ENCODE measurements at regions of chr14 and their contacts with region 1.

Region 1: DNA sequence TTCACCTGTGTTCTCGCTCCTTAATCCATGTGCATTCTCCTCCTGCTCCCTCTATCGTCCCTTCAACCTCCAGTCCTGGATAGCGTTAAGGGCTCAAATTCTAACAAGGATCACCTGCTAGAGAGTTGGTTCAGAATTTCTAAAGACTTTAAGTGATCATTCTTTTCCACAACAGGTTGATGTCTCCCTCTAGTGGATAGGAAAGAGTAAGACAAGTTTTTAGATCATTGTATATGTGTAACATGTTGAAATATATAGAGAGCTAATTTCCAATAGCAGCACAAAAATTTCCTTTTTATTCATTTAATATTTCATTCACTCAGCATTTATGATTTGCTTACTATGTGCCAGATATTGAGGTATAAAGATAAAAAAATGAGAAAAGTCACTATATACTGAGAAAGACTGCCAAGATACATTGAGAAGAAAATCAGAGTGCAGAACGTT is 9.3 kb upstream of the ESR2 start:
- DNase-seq: peak; percentile 65
- H3K4me3 ChIP-seq: no peak overlapping the region
- H3K27ac ChIP-seq: no peak overlapping the region
- H3K4me1 ChIP-seq: no peaks in the 10 kb centered on the region
- H3K27me3 ChIP-seq: no peaks in the 10 kb centered on the region
- CTCF ChIP-seq: peak; percentile 71 to 83

Region 2: GRCh38 chr14:63800651-63801375 is 502.7 kb before region 1 on chr14:
- CTCF ChIA-PET with region 1: no interaction called
- dilution Hi-C with region 1: no loop called
- in situ Hi-C with region 1: loop called (anchors 10 kb)
- intact Hi-C with region 1: loop called (anchors 1 kb)
- DNase-seq: no peak
- H3K4me3 ChIP-seq: no peak overlapping the region
- H3K27ac ChIP-seq: no peak overlapping the region
- H3K4me1 ChIP-seq: no peaks in the 10 kb centered on the region
- H3K27me3 ChIP-seq: no peaks in the 10 kb centered on the region
- CTCF ChIP-seq: no peak

Region 3: GRCh38 chr14:64005822-64006221 is 297.7 kb before region 1 on chr14:
- CTCF ChIA-PET with region 1: interaction called, 20 read pairs
- dilution Hi-C with region 1: no loop called
- in situ Hi-C with region 1: loop called in 1 of 2 experiments (anchors 25 kb)
- intact Hi-C with region 1: loop called (anchors 1 kb)
- DNase-seq: no peak
- H3K4me3 ChIP-seq: no peak overlapping the region
- H3K27ac ChIP-seq: no peak overlapping the region
- H3K4me1 ChIP-seq: no peaks in the 10 kb centered on the region
- H3K27me3 ChIP-seq: no peaks in the 10 kb centered on the region
- CTCF ChIP-seq: no peak

Region 4: DNA sequence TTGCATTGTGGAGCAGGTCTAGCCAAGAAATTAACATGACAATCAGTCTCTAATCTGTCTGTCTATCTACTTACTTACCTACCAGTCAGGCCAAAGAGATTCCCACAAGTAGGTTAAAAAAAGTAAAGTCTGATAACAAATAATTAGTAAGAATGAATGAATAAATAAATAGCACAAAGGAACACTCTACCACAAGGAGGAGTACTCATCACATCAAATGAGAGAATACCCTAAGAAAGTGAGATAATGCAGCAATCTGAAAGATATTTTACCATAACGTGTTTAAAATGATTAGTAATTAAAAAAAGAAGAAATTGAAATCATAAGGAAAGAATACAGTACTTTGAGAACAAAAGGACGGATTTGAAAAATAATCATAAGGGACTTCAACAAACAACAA is 263.4 kb before region 1 on chr14:
- CTCF ChIA-PET with region 1: interaction called, 3 read pairs
- dilution Hi-C with region 1: no loop called
- in situ Hi-C with region 1: no loop called
- intact Hi-C with region 1: loop called (anchors 1 kb)
- DNase-seq: no peak
- H3K4me3 ChIP-seq: no peak overlapping the region
- H3K27ac ChIP-seq: no peak overlapping the region
- H3K4me1 ChIP-seq: no peaks in the 10 kb centered on the region
- H3K27me3 ChIP-seq: no peaks in the 10 kb centered on the region
- CTCF ChIP-seq: peak; percentile 35 to 41

Region 5: DNA sequence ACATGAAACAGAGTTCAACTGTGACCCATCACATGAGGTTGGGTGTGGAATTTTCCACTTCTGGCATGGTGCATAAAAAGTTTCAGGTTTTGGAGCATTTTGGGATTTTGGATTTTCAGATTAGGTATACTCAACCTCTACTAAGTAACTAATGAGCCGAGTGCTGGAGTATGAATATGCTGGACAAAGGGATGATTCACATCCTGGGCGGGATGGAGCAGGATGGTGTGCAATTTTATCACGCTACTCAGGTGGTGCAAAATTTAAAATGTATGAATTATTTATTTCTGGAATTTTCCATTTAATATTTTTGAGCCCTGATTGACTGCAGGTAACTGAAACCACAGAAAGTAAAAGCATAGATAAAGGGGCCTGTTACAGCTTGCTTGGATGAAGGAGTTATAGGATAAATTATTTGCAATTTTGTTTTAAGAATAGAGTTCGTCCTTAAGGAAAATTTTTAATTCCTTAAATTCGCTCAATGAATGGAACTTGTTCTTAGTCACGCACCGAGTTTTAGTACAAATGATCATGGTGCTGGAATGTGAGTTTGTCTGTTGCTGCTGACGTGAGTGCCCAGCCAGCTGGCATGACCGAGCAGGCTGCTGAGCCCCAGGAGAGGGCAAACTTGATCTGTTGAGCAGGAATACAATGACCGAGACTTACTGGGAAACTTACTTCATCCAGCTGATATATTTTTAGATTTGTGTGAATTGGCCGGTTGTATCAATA is 185.7 kb before region 1 on chr14:
- CTCF ChIA-PET with region 1: interaction called, 8 read pairs
- dilution Hi-C with region 1: no loop called
- in situ Hi-C with region 1: no loop called
- intact Hi-C with region 1: loop called (anchors 2 kb)
- DNase-seq: peak; percentile 92
- H3K4me3 ChIP-seq: peak overlapping the region in 2 of 3 experiments; percentile 25 to 36
- H3K27ac ChIP-seq: peak overlapping the region; percentile 98
- H3K4me1 ChIP-seq: peaks cover 25% of the 10 kb centered on the region
- H3K27me3 ChIP-seq: no peaks in the 10 kb centered on the region
- CTCF ChIP-seq: peak; percentile 10 to 38

Region 6: DNA sequence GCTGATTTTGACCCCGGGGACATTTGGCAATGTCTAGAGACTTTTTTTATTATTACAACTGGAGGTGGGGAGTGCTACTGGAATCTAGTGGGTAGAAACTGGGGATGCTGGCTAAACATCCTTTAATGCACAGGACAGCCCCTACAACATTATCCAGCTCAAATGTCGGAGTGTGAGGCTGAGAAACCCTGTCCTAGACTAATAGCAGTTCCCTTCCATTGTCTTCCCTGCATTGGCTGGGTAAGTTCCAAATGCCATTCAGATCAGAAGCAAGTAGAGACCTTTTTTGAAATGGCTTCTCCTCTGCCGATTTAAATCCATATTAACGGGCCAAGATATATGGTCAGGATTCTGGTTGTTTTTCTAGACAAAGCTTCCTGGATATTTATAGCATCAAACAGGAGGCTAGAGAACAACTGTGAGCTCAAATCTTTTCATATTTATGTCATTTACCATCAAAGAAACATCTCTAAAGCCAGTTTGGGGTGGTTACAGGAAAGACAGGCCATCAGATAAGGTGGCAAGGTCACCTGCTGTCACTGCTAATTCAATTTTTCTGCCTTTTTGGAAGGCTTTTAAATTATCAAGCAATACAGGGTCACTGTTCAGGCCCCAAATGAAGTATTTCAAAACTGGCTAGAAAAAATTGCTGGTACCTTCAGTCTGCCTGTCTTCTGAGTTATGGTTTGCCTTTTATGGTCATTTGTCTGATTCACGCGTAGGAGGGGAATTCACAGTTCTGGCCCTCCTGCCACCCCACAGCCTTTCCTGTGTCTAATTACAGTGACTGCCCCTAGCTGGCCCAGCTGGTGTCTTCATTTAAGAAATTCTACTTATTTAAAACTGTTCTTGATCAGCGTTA is 141.7 kb after region 1 on chr14:
- CTCF ChIA-PET with region 1: no interaction called
- dilution Hi-C with region 1: no loop called
- in situ Hi-C with region 1: no loop called
- intact Hi-C with region 1: no loop called
- DNase-seq: peak; percentile 80
- H3K4me3 ChIP-seq: no peak overlapping the region
- H3K27ac ChIP-seq: peak overlapping the region; percentile 39
- H3K4me1 ChIP-seq: peaks cover 15% of the 10 kb centered on the region
- H3K27me3 ChIP-seq: no peaks in the 10 kb centered on the region
- CTCF ChIP-seq: no peak

Measured in mammary epithelial cell (primary cell).